ENCODE measurements at regions of chr4 and their contacts with region 1.

Region 1: GRCh38 chr4:3352941-3353594 is 60.2 kb downstream of the RGS12 start:
- DNase-seq: no peak
- H3K4me3 ChIP-seq: no peak overlapping the region
- H3K4me3 Mint-ChIP-seq: no peak overlapping the region
- H3K27ac ChIP-seq: no peak overlapping the region
- H3K27ac Mint-ChIP-seq: no peak overlapping the region
- H3K4me1 ChIP-seq: peaks cover 5 to 8% of the 10 kb centered on the region in 2 donors
- H3K4me1 Mint-ChIP-seq: peaks cover 16% of the 10 kb centered on the region
- H3K27me3 ChIP-seq: no peaks in the 10 kb centered on the region
- H3K27me3 Mint-ChIP-seq: no peaks in the 10 kb centered on the region
- CTCF ChIP-seq: no peak

Region 2: GRCh38 chr4:3388471-3389232 is 35.6 kb after region 1 on chr4:
- intact Hi-C with region 1: loop called in 1 of 2 experiments (anchors 5 kb)
- DNase-seq: peak; percentile 90 to 94 (median 94)
- H3K4me3 ChIP-seq: peak overlapping the region; percentile 28 to 64 (median 29)
- H3K4me3 Mint-ChIP-seq: peak overlapping the region; percentile 76 to 91
- H3K27ac ChIP-seq: peak overlapping the region; percentile 96
- H3K27ac Mint-ChIP-seq: peak overlapping the region; percentile 98 to 100 (median 99)
- H3K4me1 ChIP-seq: peaks cover 65 to 66% of the 10 kb centered on the region in 2 donors
- H3K4me1 Mint-ChIP-seq: peaks cover 64% of the 10 kb centered on the region
- H3K27me3 ChIP-seq: no peaks in the 10 kb centered on the region
- H3K27me3 Mint-ChIP-seq: peaks cover 0 to 2% (median 0%) of the 10 kb centered on the region in 3 donors
- CTCF ChIP-seq: no peak